ENCODE measurements at regions of chr20 and their contacts with region 1.

Region 1: GRCh38 chr20:33470457-33470856 is 19.4 kb upstream of the CBFA2T2 start:
- DNase-seq: no peak
- H3K4me3 ChIP-seq: no peak overlapping the region
- H3K4me3 Mint-ChIP-seq: no peak overlapping the region
- H3K27ac Mint-ChIP-seq: no peak overlapping the region
- H3K4me1 ChIP-seq: no peaks in the 10 kb centered on the region; the same call in 1 of the 2 replicates
- H3K4me1 Mint-ChIP-seq: no peaks in the 10 kb centered on the region
- H3K27me3 ChIP-seq: no peaks in the 10 kb centered on the region
- H3K27me3 Mint-ChIP-seq: no peaks in the 10 kb centered on the region
- CTCF ChIP-seq: no peak

Region 2: DNA sequence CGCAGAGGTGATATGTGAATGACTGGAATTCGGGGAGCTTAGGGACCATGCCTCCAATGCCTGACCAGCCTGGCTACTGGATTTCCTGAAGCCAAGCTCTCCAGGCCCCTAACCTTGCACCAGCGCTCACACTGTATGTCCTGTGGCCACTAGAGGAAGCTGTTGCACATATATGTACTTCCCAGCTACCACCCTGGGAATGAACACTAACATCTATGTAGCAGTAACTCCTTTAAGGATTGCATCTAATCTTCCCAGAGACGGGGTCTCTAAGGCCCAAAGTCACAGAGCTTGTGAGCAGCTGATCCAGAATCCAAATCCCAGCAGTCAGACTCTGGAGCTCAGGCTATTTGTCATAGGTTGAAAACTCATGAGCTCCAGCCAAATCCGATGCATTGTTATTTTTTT is 207.8 kb before region 1 on chr20:
- CTCF ChIA-PET with region 1: no interaction called
- POLR2A ChIA-PET with region 1: no interaction called
- intact Hi-C with region 1: no loop called
- DNase-seq: peak; percentile 70 to 80
- H3K4me3 ChIP-seq: no peak overlapping the region
- H3K4me3 Mint-ChIP-seq: no peak overlapping the region
- H3K27ac Mint-ChIP-seq: no peak overlapping the region
- H3K4me1 ChIP-seq: no peaks in the 10 kb centered on the region
- H3K4me1 Mint-ChIP-seq: no peaks in the 10 kb centered on the region
- H3K27me3 ChIP-seq: peaks cover 2% of the 10 kb centered on the region; the same call in 1 of the 2 replicates
- H3K27me3 Mint-ChIP-seq: peaks cover 11% of the 10 kb centered on the region
- CTCF ChIP-seq: peak; percentile 80 to 98

Region 3: GRCh38 chr20:33489495-33490022 is 19.1 kb after region 1 on chr20:
- CTCF ChIA-PET with region 1: interaction called, 6 read pairs
- POLR2A ChIA-PET with region 1: interaction called, 12 read pairs
- intact Hi-C with region 1: loop called (anchors 2 kb)
- DNase-seq: peak; percentile 100
- H3K4me3 ChIP-seq: peak overlapping the region; percentile 16
- H3K4me3 Mint-ChIP-seq: peak overlapping the region; percentile 92
- H3K27ac Mint-ChIP-seq: peak overlapping the region; percentile 38
- H3K4me1 ChIP-seq: peaks cover 14% of the 10 kb centered on the region
- H3K4me1 Mint-ChIP-seq: peaks cover 8% of the 10 kb centered on the region
- H3K27me3 ChIP-seq: no peaks in the 10 kb centered on the region
- H3K27me3 Mint-ChIP-seq: no peaks in the 10 kb centered on the region
- CTCF ChIP-seq: no peak

Measured in Caco-2 (cell line).